ENCODE measurements at regions of chr21 and their contacts with region 1.

Region 1: DNA sequence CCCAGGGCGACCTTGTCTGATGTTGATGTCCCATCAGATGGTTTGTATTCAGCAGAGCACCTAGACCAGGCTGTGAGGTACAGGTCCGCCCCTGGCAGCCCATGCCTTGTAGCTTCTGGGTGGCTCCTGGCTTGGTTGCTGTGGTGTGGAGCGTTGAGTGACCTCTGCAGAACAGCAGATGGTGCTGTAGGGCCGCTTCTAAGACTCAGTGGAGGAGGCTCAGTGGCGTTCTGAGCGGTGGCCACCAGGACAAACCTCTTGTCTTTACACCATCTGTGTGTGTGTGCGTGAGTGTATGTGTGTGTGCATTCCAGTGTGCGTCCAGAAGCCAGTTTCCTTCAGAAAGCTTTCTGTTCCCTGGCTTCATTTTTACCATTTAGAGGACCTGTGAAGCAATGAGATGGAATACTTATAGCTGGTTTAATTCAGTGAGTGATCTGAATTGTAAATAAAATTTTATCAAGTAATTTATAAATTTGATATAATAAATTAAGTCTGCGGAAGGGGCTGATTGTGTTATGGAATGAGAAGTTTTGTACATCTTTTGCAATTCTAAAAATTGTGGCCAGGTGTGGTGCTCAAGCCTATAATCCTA is 66.1 kb downstream of the ADARB1 start:
- H3K4me3 Mint-ChIP-seq: no peak overlapping the region
- H3K27ac Mint-ChIP-seq: no peak overlapping the region
- H3K4me1 Mint-ChIP-seq: no peaks in the 10 kb centered on the region
- H3K27me3 Mint-ChIP-seq: peaks cover 11% of the 10 kb centered on the region

Region 2: GRCh38 chr21:44949779-44950198 is 190.7 kb before region 1 on chr21:
- intact Hi-C with region 1: loop called (anchors 1 kb)
- H3K4me3 Mint-ChIP-seq: no peak overlapping the region
- H3K27ac Mint-ChIP-seq: no peak overlapping the region
- H3K4me1 Mint-ChIP-seq: peaks cover 5% of the 10 kb centered on the region
- H3K27me3 Mint-ChIP-seq: no peaks in the 10 kb centered on the region

Region 3: DNA sequence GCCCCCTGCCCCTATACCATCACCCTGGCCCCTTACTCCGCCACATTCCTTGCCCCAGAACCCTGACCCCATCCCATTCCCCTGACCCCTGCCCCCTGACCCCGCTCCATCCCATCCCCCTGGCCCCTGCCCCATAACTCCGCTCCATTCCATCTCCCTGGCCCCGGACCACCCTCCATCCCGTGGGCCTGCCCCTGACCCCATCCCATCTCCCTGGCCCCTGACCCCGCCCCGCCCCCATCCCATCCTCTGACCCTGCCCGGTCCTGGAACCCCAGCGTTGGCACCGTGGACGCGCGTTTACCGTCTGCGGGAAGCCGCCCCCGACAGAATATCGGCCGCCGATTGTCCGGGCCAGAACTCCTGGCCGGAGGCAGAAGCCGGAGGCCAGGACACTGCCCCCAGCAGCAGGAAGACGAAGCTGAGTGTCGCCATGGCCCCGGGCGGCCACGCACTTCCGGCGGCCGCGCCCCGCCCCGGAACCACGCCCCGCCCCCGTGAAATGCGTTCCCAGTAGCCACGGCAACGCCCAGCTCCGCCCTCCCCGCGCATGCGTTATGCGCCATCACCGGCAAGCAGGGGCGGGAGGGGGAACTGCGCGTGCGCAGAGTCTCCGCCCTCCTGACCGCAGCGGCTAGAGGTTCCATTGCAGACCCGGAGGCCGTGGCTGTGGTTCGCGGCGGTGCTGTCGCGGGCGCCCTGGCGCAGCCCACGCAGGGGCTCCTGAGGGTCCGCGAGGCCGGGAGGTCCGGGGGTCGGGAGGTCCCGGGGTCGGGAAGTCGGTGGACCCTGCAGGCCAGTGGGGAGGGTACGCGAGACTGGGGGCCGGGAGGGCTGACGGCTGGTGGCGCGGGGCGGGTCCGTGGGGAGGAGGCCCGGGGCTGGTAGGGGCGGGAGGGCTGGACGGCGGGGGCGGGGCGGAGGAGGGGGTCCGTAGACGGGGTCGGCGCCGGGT is 147.3 kb after region 1 on chr21 and contains the start of gene POFUT2:
- intact Hi-C with region 1: loop called (anchors 5 kb)
- H3K4me3 Mint-ChIP-seq: peak within 1 kb of the TSS; percentile 85
- H3K27ac Mint-ChIP-seq: peak within 1 kb of the TSS; percentile 87
- H3K4me1 Mint-ChIP-seq: peaks cover 32% of the 10 kb centered on the region
- H3K27me3 Mint-ChIP-seq: peaks cover under 1% of the 10 kb centered on the region

Region 4: GRCh38 chr21:45309069-45309986 is 168.9 kb after region 1 on chr21:
- intact Hi-C with region 1: loop called (anchors 1 kb)
- H3K4me3 Mint-ChIP-seq: peak overlapping the region; percentile 0
- H3K27ac Mint-ChIP-seq: no peak overlapping the region
- H3K4me1 Mint-ChIP-seq: peaks cover 11% of the 10 kb centered on the region
- H3K27me3 Mint-ChIP-seq: peaks cover 16% of the 10 kb centered on the region

Region 5: DNA sequence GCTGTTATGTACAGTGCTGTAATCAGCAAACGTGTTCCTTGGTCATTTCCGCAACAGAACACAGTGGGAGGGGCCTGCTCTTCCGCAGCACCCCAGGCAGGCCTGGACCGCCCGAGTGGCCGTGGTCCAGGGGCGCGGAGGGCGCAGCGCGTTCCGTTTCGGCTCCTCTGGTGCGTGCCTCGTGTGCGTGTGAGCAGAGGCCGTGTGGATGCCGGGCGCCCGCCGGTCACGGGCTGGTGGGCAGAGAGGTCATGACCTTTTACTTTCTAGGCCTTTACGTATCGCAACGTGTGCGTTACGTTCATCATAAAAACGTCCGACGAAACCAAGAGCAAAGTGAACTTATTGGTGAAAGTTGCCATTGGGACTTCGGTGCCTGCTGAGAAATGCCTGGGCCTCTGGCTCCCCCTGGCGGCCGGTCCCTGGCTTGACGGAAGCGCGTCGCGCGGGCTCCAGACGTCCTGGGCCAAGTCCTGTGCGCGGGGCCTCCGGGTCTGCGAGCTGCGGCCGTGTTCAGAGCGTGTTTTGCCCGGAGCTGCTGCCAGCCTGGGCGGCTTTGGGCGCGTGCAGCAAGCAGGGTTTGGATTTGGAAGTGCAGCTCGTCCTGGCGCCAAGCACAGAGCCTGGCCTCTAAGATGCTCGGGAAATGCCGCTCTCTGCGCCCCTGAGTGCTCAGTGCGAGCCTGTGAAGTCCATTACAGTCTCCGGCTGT is 298.9 kb after region 1 on chr21:
- intact Hi-C with region 1: loop called (anchors 1 kb)
- H3K4me3 Mint-ChIP-seq: peak overlapping the region; percentile 61
- H3K27ac Mint-ChIP-seq: peak overlapping the region; percentile 55
- H3K4me1 Mint-ChIP-seq: no peaks in the 10 kb centered on the region
- H3K27me3 Mint-ChIP-seq: peaks cover 27% of the 10 kb centered on the region

Region 6: DNA sequence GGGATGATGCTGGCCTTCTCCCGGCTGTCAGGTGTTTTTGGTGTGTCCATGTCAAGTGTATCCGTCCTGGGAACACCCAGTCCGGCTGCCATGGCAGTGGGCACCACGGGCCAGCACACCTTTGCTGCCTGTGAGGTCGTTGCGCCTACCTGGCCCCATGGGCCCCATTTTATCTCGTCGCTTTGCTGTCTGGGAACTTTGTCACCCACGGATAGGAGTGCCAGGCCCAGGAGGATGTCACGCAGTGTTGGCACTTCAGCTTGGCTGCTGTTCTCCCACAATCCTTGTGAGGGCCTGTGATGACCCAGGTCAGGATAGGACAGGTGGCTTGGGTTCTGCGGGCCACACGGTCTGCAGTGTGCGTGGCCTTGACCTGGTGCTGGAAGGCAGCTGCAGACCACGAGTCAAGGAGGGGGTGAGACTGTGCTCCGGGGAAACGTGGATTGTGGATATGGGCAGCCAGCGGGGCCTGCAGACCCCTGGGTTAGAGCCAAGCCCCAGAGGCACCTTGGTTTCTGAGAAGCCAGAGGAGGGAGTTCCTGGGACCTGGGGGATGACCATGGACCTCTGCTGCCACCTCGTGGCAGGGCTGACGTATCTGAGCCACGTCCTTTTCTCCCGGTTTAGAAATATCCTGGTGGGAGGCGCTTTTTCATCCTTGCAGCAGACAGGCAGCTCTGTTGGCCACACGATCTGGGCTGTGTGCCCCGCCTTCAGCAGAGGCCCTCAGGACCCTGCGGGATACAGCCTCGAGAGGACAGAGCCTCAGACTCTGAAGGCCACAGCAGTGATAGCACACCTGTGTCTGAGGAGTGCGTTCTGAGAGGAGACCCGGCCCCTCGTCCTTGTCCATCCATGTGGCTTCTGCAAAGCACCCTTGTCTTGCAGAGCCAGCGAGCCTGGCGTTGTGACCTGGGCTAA is 680.0 kb after region 1 on chr21:
- intact Hi-C with region 1: loop called (anchors 5 kb)
- H3K4me3 Mint-ChIP-seq: no peak overlapping the region
- H3K27ac Mint-ChIP-seq: no peak overlapping the region
- H3K4me1 Mint-ChIP-seq: peaks cover 19% of the 10 kb centered on the region
- H3K27me3 Mint-ChIP-seq: no peaks in the 10 kb centered on the region